RWPE1 (cell line): ENCODE measurements at regions of chr16 and their contacts with region 1.

Region 1: GRCh38 chr16:67294938-67295361 is 15.6 kb downstream of the PLEKHG4 start:
- DNase-seq: no peak
- H3K27ac ChIP-seq: no peak overlapping the region
- CTCF ChIP-seq: no peak

Region 2: DNA sequence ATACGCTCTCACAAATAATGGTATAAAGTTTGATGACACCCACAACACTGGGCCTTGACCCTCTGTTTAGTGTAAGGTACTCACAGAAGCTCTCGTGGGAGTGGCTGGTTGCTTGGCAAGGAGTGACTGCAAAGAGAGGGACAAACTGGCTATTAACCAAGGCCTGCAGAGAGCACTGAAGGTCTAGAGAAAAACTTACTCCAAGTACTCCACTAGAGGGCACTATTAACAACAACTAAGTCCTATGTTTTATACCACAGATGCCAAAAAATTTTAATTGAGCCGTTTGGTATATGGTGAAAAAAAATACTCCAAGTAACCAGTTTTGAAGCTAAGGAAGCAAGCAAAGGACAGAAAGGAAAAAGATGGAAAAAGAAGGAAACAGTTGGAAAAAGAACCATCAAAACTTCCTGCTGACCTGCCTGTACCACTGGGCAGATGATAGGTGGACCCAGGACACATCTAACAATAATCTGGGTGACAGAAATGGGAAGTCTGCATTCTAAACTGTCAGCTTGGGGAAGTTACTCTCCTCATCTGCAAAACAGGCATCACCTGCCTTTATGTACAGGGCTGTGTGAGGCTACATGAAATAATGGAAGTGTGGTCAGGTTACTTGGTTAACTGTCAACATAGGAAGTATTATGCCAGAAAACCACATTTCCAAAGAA is 566.7 kb before region 1 on chr16:
- CTCF ChIA-PET with region 1: no interaction called
- POLR2A ChIA-PET with region 1: no interaction called
- DNase-seq: peak; percentile 55
- H3K27ac ChIP-seq: no peak overlapping the region; the same call in 1 of the 2 replicates
- CTCF ChIP-seq: peak; percentile 77

Region 3: GRCh38 chr16:67268136-67268579 is 26.8 kb before region 1 on chr16:
- CTCF ChIA-PET with region 1: no interaction called
- POLR2A ChIA-PET with region 1: no interaction called
- DNase-seq: no peak
- H3K27ac ChIP-seq: no peak overlapping the region; the same call in 1 of the 2 replicates
- CTCF ChIP-seq: no peak

Region 4: GRCh38 chr16:67326472-67327309 is 31.7 kb after region 1 on chr16 and contains the starts of genes KCTD19 and LRRC36:
- CTCF ChIA-PET with region 1: no interaction called
- POLR2A ChIA-PET with region 1: interaction called, 10 read pairs
- DNase-seq: no peak
- H3K27ac ChIP-seq: no peak within 1 kb of the TSS
- CTCF ChIP-seq: peak; percentile 38; the same call in 1 of the 2 replicates